Heart left ventricle (tissue), 16 donors: ENCODE measurements at regions of chr3 and their contacts with region 1.

Region 1: DNA sequence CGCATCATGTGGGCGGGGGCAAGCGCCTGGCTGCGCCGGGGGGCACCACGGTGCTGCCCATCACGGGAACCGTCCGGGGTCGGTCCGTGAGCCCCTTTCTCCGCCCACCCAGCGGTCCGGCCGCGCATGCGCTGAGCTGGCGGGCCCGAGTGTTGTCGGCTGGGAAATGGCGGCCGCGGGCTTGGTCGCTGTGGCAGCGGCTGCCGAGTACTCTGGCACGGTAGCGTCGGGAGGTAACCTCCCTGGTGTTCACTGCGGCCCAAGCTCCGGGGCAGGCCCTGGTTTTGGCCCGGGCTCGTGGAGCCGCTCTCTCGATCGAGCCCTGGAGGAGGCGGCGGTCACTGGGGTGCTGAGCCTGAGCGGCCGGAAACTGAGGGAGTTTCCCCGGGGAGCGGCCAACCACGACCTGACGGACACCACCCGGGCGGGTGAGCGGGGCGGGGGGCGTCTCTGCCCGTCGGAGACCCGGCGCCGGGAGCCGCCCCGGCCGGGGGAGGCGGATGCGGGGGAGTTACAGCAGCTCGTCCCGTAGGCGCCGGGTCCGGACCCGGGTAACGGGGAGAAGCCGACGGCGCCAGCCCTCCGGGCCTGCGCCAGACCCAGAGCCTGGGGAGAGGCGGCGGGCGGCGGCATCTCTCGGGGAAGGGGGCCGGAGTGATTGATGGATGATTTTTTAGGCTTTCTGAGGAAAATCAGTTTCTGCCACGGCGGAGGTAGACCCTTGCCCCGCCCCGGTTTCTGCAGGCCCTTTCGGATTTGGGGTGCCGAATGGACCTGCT is at the start of gene LRCH3:
- DNase-seq: peak; percentile 81 to 93 (median 86)
- ATAC-seq: peak; percentile 64 to 91 (median 90)
- H3K4me3 ChIP-seq: peak within 1 kb of the TSS; percentile 45 to 95 (median 86)
- H3K27ac ChIP-seq: peak within 1 kb of the TSS; percentile 78 to 98 (median 96)
- H3K4me1 ChIP-seq: peaks cover 0 to 38% (median 23%) of the 10 kb centered on the region in 12 donors
- H3K27me3 ChIP-seq: no peaks in the 10 kb centered on the region
- CTCF ChIP-seq: peak in 1 of 12 donors; percentile 3
- POLR2A ChIP-seq: peak in 1 of 2 donors; percentile 75
- total RNA-seq, gene LRCH3: 17.9 to 40.3 (median 28.6) TPM

Region 2: GRCh38 chr3:197749601-197750395 is 41.5 kb before region 1 on chr3 and contains the start of gene FYTTD1:
- intact Hi-C with region 1: loop called in 3 of 10 experiments (anchors 2 to 5 kb)
- DNase-seq: peak; percentile 92 to 97 (median 94)
- ATAC-seq: peak; percentile 84 to 95 (median 92)
- H3K4me3 ChIP-seq: peak within 1 kb of the TSS; percentile 68 to 98 (median 86)
- H3K27ac ChIP-seq: peak within 1 kb of the TSS; percentile 95 to 99 (median 96)
- H3K4me1 ChIP-seq: peaks cover 11 to 66% (median 40%) of the 10 kb centered on the region in 12 donors
- H3K27me3 ChIP-seq: no peaks in the 10 kb centered on the region
- CTCF ChIP-seq: peak; percentile 30 to 76 (median 54)
- POLR2A ChIP-seq: peak in 1 of 2 donors; percentile 81
- total RNA-seq, gene FYTTD1: 49.1 to 93.6 (median 76.3) TPM

Region 3: DNA sequence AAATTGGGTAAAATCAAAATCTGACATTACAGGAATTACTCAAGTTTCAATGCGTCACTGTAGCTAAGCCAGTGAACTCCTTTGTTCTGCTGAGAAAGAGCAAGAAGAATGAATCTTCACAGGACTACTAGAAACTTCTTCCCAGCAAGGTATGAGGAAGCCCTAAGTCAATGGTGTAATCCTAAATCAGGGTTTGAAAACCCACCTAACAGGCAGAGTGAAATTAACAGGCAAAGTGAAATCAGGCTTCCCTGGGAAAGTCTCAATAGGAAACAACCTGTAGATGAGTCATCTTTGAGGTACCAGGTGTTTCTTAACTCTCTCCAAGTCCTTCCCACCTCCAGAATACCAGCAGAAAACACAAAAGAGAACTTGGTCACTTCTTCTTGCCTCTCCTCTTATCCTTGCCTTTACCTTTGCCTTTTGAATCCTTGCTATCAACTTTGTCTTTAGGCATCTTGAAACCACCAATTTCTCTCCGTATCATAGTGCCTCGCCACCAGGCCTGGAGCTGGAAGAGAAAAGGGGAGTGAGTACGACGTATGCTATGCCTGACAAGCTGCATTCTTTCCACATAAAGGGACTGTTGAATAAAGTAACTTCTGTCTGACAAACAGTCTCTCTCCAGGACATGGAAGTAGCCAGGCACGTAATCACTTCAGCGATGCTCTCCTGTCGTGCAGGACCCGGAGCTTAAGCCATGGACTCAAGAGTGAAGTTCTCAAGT is 98.1 kb after region 1 on chr3:
- intact Hi-C with region 1: no loop called
- DNase-seq: no peak
- ATAC-seq: no peak
- H3K4me3 ChIP-seq: no peak overlapping the region
- H3K27ac ChIP-seq: no peak overlapping the region
- H3K4me1 ChIP-seq: no peaks in the 10 kb centered on the region
- H3K27me3 ChIP-seq: no peaks in the 10 kb centered on the region
- CTCF ChIP-seq: no peak
- POLR2A ChIP-seq: no peak